CD8-positive, alpha-beta T cell (primary cell): ENCODE measurements at regions of chr12 and their contacts with region 1.

Region 1: GRCh38 chr12:111024205-111024801 is 103.9 kb upstream of the MYL2 start:
- DNase-seq: peak; percentile 13 to 74 (median 47)
- ATAC-seq: peak; percentile 67
- H3K4me3 ChIP-seq: no peak overlapping the region
- H3K4me3 Mint-ChIP-seq: no peak overlapping the region
- H3K27ac ChIP-seq: no peak overlapping the region
- H3K27ac Mint-ChIP-seq: no peak overlapping the region
- H3K4me1 ChIP-seq: no peaks in the 10 kb centered on the region
- H3K4me1 Mint-ChIP-seq: peaks cover 2% of the 10 kb centered on the region
- H3K27me3 ChIP-seq: no peaks in the 10 kb centered on the region
- H3K27me3 Mint-ChIP-seq: peaks cover 22% of the 10 kb centered on the region
- CTCF ChIP-seq: peak; percentile 74

Region 2: DNA sequence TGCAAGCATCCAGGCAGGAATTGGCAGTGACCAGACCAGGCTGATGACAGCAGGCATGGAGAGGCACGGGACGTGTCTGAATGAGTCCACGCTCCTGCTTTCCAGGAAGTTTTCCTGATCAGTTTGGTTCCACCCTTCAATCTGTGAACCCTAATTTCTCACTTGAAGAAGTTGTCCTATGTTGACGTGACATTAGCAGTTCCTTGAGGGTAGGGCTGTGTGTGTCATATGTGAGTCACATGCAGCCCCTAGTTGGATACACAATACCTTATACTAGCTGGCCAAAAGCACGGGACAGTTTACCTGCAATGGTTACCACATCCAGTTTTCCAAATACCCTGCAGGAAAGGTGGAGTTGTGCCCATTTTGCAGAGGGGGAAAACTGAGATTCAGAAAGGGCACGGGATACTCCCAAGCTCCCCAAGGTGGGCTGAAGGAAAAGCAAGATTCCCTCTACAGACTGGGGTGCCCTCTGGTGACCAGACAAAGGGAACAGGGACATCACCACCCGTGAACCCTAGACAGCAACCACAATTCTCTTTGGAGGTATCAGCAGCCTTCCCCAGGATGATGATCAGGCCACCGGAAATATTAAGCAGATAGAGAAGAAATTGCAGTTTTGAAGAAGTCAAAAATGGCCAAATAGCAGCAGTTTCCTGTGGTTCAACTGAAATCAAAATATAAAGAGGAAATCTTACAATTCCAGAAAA is 150.1 kb after region 1 on chr12:
- CTCF ChIA-PET with region 1: interaction called, 5 read pairs
- POLR2A ChIA-PET with region 1: no interaction called
- intact Hi-C with region 1: loop called in 1 of 2 experiments (anchors 5 kb)
- DNase-seq: peak in 2 of 9 experiments; percentile 13 to 18
- ATAC-seq: no peak
- H3K4me3 ChIP-seq: no peak overlapping the region
- H3K4me3 Mint-ChIP-seq: no peak overlapping the region
- H3K27ac ChIP-seq: no peak overlapping the region
- H3K27ac Mint-ChIP-seq: no peak overlapping the region
- H3K4me1 ChIP-seq: no peaks in the 10 kb centered on the region
- H3K4me1 Mint-ChIP-seq: no peaks in the 10 kb centered on the region
- H3K27me3 ChIP-seq: no peaks in the 10 kb centered on the region
- H3K27me3 Mint-ChIP-seq: peaks cover 32% of the 10 kb centered on the region
- CTCF ChIP-seq: no peak

Region 3: DNA sequence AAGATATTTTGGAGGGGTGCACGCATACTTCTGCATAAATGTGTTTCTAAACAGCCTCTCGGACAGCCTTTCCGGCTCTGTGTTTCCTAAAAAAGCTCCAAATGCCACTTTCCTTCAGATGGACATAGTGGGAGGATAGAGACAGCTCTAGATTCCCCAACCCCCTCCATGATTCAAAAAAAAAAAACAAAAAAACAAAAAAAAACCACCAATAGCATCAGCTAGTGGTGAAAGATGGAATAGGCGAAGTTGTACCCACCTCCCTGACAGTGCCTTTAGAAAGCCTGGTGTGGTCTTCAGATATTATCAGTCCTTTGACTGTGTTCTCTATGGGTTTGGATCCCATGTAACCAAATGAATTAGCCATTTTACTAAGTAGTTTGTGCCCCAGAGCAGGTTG is 250.5 kb after region 1 on chr12:
- CTCF ChIA-PET with region 1: interaction called, 10 read pairs
- POLR2A ChIA-PET with region 1: no interaction called
- intact Hi-C with region 1: no loop called
- DNase-seq: no peak
- ATAC-seq: no peak
- H3K4me3 ChIP-seq: no peak overlapping the region
- H3K4me3 Mint-ChIP-seq: no peak overlapping the region
- H3K27ac ChIP-seq: no peak overlapping the region
- H3K27ac Mint-ChIP-seq: no peak overlapping the region
- H3K4me1 ChIP-seq: no peaks in the 10 kb centered on the region
- H3K4me1 Mint-ChIP-seq: peaks cover 2% of the 10 kb centered on the region
- H3K27me3 ChIP-seq: no peaks in the 10 kb centered on the region
- H3K27me3 Mint-ChIP-seq: peaks cover 20% of the 10 kb centered on the region
- CTCF ChIP-seq: no peak

Region 4: GRCh38 chr12:111298582-111299436 is 274.5 kb after region 1 on chr12:
- CTCF ChIA-PET with region 1: interaction called, 13 read pairs
- POLR2A ChIA-PET with region 1: no interaction called
- intact Hi-C with region 1: loop called in 1 of 2 experiments (anchors 5 kb)
- DNase-seq: peak in 8 of 9 experiments; percentile 26 to 65 (median 46)
- ATAC-seq: peak; percentile 34
- H3K4me3 ChIP-seq: no peak overlapping the region
- H3K4me3 Mint-ChIP-seq: no peak overlapping the region
- H3K27ac ChIP-seq: no peak overlapping the region
- H3K27ac Mint-ChIP-seq: no peak overlapping the region
- H3K4me1 ChIP-seq: no peaks in the 10 kb centered on the region
- H3K4me1 Mint-ChIP-seq: no peaks in the 10 kb centered on the region
- H3K27me3 ChIP-seq: no peaks in the 10 kb centered on the region
- H3K27me3 Mint-ChIP-seq: peaks cover 6% of the 10 kb centered on the region
- CTCF ChIP-seq: peak; percentile 48

Region 5: DNA sequence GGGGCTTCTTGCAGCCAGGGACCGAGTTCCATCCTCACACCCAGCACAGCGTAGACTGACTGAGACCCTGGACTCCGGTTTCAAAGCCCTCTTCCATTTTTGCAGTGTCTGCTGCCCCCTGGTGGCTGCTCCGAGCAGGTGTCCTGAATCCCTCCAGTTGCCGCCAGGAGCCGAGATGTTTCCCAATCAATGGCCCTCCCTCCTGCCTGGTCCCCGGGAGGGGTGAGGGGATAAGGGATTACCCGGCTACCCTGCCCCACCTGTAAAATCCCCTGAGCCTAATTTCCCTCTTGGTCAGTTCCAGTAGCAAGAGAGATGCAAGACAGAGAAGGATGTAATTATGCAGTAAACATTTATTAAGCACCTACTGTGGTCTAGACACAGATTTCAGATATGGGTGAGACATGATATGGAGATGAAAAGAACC is 289.5 kb after region 1 on chr12:
- CTCF ChIA-PET with region 1: interaction called, 6 read pairs
- POLR2A ChIA-PET with region 1: no interaction called
- intact Hi-C with region 1: loop called in 1 of 2 experiments (anchors 1 kb)
- DNase-seq: peak; percentile 36 to 85 (median 72)
- ATAC-seq: peak; percentile 52
- H3K4me3 ChIP-seq: no peak overlapping the region
- H3K4me3 Mint-ChIP-seq: no peak overlapping the region
- H3K27ac ChIP-seq: no peak overlapping the region
- H3K27ac Mint-ChIP-seq: no peak overlapping the region
- H3K4me1 ChIP-seq: peaks cover 12% of the 10 kb centered on the region
- H3K4me1 Mint-ChIP-seq: peaks cover 10% of the 10 kb centered on the region
- H3K27me3 ChIP-seq: peaks cover 3% of the 10 kb centered on the region in 2 experiments
- H3K27me3 Mint-ChIP-seq: peaks cover 19% of the 10 kb centered on the region
- CTCF ChIP-seq: peak; percentile 95

Region 6: DNA sequence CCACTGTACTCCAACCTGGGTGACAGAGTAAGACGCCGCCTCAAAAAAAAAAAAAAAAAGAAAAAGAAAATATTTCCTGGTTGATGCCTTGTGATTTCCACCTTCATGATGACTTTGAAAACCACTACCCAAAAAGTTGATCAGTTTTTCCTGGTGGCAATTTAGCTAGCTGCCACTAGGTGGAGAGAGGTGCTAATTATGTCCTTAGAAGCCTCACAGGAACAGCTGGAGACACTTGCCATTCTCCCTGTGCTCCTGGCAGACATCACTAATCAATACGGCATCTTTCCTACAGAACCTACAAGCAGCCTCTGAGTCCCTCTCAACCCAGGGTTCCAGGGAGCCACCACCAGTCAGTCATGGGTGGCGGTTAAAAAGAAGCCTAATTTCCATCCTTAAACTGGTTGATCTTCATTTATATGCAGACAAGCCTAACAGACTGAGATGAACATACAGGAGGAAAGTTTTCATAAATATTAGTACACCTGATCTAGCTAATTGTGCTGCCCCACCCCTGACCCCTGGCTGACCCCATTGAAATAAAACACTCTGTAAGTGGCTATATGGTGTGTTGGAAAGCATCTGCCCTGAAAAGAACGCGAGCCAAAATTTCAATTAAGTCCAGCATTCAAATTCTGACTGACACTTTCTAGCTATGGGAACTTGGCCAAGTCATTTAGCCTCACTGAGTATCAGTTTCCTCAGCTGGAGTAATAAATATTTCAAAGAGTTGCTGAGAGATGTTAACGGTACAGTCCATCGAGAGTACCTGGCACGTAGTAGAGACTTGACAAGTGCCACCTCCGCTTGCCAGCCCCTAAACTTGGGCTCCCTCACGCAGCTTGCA is 1876.2 kb after region 1 on chr12:
- CTCF ChIA-PET with region 1: no interaction called
- POLR2A ChIA-PET with region 1: no interaction called
- intact Hi-C with region 1: no loop called
- DNase-seq: peak in 6 of 9 experiments; percentile 7 to 65 (median 35)
- ATAC-seq: peak; percentile 59
- H3K4me3 ChIP-seq: no peak overlapping the region
- H3K4me3 Mint-ChIP-seq: no peak overlapping the region
- H3K27ac ChIP-seq: no peak overlapping the region
- H3K27ac Mint-ChIP-seq: no peak overlapping the region
- H3K4me1 ChIP-seq: peaks cover 4% of the 10 kb centered on the region
- H3K4me1 Mint-ChIP-seq: peaks cover 22% of the 10 kb centered on the region
- H3K27me3 ChIP-seq: no peaks in the 10 kb centered on the region
- H3K27me3 Mint-ChIP-seq: peaks cover 7% of the 10 kb centered on the region
- CTCF ChIP-seq: peak; percentile 71